Activated CD8-positive, alpha-beta T cell treated with anti-CD3 and anti-CD28 coated beads, Interleukin-2, amount 10 ng/mL, durations not matched to agents 7 days and 5 days (primary cell): ENCODE measurements at regions of chr6 and their contacts with region 1.

Region 1: GRCh38 chr6:27809939-27810767 is 102.0 kb downstream of the OR2B2 start:
- DNase-seq: peak; percentile 89
- ATAC-seq: peak; percentile 32
- H3K4me3 Mint-ChIP-seq: peak overlapping the region; percentile 95
- H3K27ac Mint-ChIP-seq: peak overlapping the region; percentile 98
- H3K4me1 Mint-ChIP-seq: peaks cover 66% of the 10 kb centered on the region
- H3K27me3 Mint-ChIP-seq: peaks cover 2% of the 10 kb centered on the region

Region 2: DNA sequence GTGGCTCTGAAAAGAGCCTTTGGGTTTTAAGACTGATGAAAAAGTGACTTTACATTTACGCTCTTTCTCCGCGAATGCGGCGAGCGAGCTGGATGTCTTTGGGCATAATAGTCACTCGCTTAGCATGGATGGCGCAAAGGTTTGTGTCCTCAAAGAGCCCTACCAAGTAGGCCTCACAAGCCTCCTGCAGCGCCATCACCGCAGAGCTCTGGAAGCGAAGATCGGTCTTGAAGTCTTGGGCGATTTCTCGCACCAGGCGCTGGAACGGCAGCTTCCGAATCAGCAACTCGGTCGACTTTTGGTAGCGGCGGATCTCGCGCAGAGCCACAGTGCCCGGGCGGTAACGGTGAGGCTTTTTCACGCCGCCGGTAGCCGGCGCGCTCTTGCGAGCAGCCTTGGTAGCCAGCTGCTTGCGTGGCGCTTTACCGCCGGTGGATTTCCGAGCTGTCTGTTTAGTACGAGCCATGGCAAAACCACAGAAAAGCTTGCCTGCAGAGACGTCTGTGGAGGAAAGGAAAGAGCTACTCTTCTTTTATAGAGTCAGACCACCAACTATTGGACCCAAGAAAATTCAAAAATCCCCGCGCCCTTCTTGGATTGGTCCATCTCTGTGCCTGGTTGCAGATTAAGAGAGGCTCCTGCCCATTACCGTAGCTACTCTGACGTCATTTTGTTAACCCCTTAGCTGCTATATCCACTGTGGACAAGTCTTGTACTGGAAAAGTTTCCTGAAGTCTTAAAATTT is 1778.4 kb before region 1 on chr6:
- CTCF ChIA-PET with region 1: no interaction called
- POLR2A ChIA-PET with region 1: interaction called, 143 read pairs
- DNase-seq: peak; percentile 97
- ATAC-seq: peak; percentile 66
- H3K4me3 Mint-ChIP-seq: peak overlapping the region; percentile 93
- H3K27ac Mint-ChIP-seq: peak overlapping the region; percentile 99
- H3K4me1 Mint-ChIP-seq: peaks cover 68% of the 10 kb centered on the region
- H3K27me3 Mint-ChIP-seq: peaks cover 3% of the 10 kb centered on the region

Region 3: DNA sequence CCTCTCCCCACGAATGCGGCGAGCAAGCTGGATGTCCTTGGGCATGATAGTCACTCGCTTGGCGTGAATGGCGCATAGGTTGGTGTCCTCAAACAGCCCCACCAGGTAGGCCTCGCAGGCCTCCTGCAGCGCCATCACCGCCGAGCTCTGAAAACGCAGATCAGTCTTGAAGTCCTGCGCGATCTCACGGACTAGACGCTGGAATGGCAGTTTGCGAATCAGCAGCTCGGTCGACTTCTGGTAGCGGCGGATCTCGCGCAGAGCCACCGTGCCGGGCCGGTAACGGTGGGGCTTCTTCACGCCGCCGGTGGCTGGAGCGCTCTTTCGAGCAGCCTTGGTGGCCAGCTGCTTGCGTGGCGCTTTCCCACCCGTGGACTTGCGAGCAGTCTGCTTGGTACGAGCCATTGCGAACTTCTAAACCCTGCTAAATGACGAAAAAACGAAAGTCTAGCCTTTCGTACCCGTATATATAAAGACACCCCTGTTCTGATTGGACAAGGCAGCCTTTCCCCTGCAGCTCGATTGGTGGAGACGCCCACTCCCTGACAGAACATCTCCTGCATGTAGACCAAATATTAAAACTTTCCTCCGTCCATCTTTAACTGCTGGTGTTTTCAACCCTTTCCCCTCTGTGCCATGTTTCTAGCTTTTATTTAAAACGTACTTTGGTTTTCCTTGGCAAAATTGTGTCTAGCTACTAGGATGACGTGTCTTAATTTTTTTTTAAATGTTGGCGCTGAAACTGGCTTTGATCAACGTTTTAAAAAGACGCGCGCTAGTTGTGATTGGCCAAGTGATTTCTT is 1613.1 kb before region 1 on chr6:
- CTCF ChIA-PET with region 1: no interaction called
- POLR2A ChIA-PET with region 1: interaction called, 111 read pairs
- DNase-seq: peak; percentile 92
- ATAC-seq: peak; percentile 43
- H3K4me3 Mint-ChIP-seq: peak overlapping the region; percentile 99
- H3K27ac Mint-ChIP-seq: peak overlapping the region; percentile 93
- H3K4me1 Mint-ChIP-seq: peaks cover 50% of the 10 kb centered on the region
- H3K27me3 Mint-ChIP-seq: no peaks in the 10 kb centered on the region

Region 4: GRCh38 chr6:26285143-26286134 is 1524.7 kb before region 1 on chr6:
- CTCF ChIA-PET with region 1: no interaction called
- POLR2A ChIA-PET with region 1: interaction called, 12 read pairs
- DNase-seq: peak; percentile 99
- ATAC-seq: peak; percentile 79
- H3K4me3 Mint-ChIP-seq: peak overlapping the region; percentile 93
- H3K27ac Mint-ChIP-seq: peak overlapping the region; percentile 95
- H3K4me1 Mint-ChIP-seq: peaks cover 42% of the 10 kb centered on the region
- H3K27me3 Mint-ChIP-seq: peaks cover 2% of the 10 kb centered on the region

Region 5: DNA sequence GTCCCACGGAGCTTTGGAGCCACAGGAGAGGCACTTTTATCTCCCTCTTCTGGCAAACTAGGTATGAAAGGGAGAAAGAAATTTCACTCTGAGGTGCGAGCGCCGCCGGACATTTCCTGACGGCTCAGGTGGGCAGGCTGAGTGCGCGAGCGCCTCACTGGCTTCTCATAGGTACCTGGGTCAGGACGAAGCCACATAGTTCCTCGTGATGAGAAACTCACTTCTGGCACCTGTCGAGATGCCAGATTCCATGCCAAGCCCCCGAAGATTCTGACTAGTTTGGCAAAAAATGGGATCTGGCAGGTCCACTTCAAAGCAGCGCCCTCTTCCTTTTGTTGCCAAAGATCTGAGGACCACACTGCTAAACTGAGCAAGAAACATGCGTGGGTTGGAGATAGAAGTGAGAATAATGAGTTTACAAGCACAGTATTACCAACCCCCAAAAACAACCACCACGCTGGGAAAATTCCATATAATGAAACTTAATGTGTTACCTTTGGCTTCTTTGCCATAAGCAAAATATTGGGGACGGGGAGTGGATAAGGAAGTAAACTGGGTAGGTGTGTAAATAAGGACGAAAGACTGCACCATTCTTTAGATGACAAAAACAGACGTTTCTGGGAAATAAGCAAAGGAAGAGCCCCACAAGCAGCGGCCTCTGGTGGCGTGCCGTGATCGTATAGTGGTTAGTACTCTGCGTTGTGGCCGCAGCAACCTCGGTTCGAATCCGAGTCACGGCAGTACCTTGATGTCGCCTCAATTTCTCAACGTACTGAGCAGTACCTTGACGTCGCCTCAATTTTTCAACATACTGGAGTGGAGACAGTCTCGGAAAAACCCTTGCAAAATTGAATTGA is 652.5 kb before region 1 on chr6:
- CTCF ChIA-PET with region 1: interaction called, 11 read pairs
- POLR2A ChIA-PET with region 1: interaction called, 71 read pairs
- DNase-seq: peak; percentile 87
- ATAC-seq: peak; percentile 79
- H3K4me3 Mint-ChIP-seq: peak overlapping the region; percentile 80
- H3K27ac Mint-ChIP-seq: peak overlapping the region; percentile 75
- H3K4me1 Mint-ChIP-seq: peaks cover 53% of the 10 kb centered on the region
- H3K27me3 Mint-ChIP-seq: no peaks in the 10 kb centered on the region

Region 6: DNA sequence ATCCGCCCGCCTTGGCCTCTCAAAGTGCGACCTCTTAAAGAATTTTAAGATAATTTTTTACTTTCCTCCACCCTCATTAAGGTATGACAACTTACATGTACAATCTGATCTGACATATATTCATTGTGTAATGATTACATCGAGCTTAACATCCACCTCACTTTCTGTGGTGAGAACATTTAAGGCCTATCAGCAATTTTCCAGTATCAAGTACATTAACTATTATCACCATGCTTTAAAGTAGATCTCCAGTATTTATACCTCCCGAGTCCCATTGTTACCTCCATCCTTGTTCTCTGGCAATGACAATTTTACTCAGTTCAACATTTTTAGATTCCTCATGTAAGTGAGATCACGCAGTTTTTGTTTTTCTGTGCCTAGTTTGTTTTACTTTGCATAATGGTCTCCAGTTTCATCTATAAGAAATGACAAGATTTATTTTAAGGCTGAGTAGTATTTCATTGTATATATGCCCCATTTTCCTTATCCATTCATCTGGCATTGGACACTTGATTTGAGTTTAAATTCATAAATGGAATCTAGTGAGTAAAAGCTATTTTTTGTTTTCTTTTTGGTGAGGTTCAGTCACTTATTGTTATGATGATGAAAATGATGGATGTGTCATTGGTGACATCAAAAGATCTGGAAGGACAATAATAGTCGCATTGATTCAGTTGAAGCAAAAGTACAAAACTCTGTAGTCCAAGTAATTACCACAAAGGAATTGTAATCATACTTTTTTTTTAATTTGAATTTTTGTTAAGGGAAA is 15.1 kb after region 1 on chr6:
- CTCF ChIA-PET with region 1: interaction called, 3 read pairs
- POLR2A ChIA-PET with region 1: interaction called, 697 read pairs
- DNase-seq: no peak
- ATAC-seq: peak; percentile 3
- H3K4me3 Mint-ChIP-seq: peak overlapping the region; percentile 93
- H3K27ac Mint-ChIP-seq: peak overlapping the region; percentile 99
- H3K4me1 Mint-ChIP-seq: peaks cover 45% of the 10 kb centered on the region
- H3K27me3 Mint-ChIP-seq: no peaks in the 10 kb centered on the region